Activated CD8-positive, alpha-beta memory T cell treated with anti-CD3 and anti-CD28 coated beads, Interleukin-2, amount 10 ng/mL, durations not matched to agents 7 days and 5 days (primary cell): ENCODE measurements at regions of chr1 and their contacts with region 1.

Region 1: DNA sequence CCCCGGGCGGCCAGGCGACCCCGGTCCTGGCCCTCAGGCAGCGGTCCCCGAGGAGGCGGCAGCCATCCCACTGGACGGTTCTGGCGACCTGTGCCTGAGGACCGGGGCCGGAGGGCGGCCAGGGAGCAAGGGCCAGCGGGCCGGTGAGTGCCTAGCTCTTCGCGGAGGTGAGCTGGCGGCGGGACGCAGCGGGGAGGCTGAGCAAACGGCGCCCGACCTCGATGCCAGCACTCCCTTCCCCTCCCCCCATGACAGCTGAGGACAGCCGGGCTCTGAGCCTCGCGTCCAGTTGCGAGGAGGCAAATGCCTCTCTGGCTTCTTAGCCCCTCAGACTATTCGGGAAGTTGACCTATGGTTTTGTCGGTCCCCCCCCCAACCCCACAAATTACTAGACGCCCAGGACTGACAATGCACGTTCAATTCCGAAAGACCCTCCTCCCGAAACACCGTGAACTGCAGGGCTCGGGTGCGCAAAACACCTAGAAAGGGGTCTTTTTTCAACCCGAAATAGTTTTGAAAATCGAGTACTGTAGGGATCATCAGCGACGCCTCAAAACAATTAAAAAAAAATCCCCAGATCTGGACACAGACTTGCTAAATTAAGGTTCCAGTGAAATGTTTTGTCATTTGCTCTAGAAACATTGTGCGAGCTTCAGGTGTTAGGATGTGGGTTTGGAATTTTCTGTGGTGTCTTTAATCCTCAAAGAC is 8.3 kb downstream of the CDKN2C start:
- DNase-seq: peak; percentile 45
- ATAC-seq: peak; percentile 48
- H3K4me3 Mint-ChIP-seq: peak overlapping the region; percentile 77
- H3K27ac Mint-ChIP-seq: peak overlapping the region; percentile 48
- H3K4me1 Mint-ChIP-seq: peaks cover 22% of the 10 kb centered on the region
- H3K27me3 Mint-ChIP-seq: peaks cover 58% of the 10 kb centered on the region

Region 2: DNA sequence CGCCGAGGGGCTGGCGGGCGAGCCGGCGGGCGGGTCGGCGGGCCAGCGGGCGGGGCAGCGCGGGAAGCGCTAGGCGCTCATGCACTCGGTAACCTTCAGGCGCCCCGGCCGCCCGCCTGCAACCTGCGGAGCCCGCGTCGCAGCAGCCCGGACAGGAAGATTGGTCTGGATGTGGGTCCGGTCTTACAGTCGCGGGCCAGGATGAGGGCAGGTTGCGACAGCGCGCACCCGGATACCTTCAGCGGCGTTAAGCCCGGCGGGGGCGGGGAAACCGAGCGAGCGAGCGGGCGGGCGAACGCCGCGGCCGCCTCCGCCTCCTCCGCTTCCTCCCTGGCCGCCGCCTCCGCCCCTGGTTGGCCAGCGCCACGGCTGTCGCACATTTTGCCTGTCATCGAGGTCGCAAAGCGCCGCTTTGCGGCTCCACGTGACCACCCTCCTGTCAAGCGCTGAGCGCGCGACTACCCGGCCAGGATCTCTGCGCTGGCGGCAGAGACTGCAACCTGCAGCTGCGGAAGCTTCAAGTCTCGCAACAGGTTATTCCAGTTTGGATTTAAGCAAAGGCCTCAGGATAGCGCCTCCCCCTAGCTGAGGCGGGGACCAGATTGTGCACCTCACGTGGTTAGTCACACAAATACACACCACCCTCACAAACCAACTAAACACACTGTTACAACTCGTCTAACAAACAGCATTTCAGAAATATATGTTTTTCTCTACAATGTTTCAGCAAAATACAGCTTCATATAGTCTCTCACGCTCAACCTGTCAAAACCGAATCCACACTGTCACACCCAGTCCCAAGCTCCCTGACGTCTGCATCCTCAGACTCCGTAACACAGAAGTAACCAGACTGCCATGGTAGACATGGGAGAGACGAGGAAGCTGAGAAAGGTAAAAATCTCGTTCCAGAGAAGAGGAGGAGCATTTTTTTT is 18.1 kb before region 1 on chr1 and contains the start of gene FAF1:
- CTCF ChIA-PET with region 1: interaction called, 10 read pairs
- DNase-seq: peak; percentile 98
- ATAC-seq: peak; percentile 94
- H3K4me3 Mint-ChIP-seq: peak within 1 kb of the TSS; percentile 80
- H3K27ac Mint-ChIP-seq: peak within 1 kb of the TSS; percentile 89
- H3K4me1 Mint-ChIP-seq: peaks cover 15% of the 10 kb centered on the region
- H3K27me3 Mint-ChIP-seq: peaks cover 4% of the 10 kb centered on the region
- total RNA-seq, gene FAF1: 84.4 to 94.4 TPM

Region 3: GRCh38 chr1:50968158-50968820 is 10.0 kb before region 1 on chr1:
- CTCF ChIA-PET with region 1: interaction called, 23 read pairs
- DNase-seq: peak; percentile 86
- ATAC-seq: peak; percentile 82
- H3K4me3 Mint-ChIP-seq: peak overlapping the region; percentile 97
- H3K27ac Mint-ChIP-seq: peak overlapping the region; percentile 97
- H3K4me1 Mint-ChIP-seq: peaks cover 24% of the 10 kb centered on the region
- H3K27me3 Mint-ChIP-seq: peaks cover 30% of the 10 kb centered on the region

Region 4: GRCh38 chr1:50989694-50990093 is 11.4 kb after region 1 on chr1:
- CTCF ChIA-PET with region 1: no interaction called
- DNase-seq: no peak
- ATAC-seq: no peak
- H3K4me3 Mint-ChIP-seq: no peak overlapping the region
- H3K27ac Mint-ChIP-seq: no peak overlapping the region
- H3K4me1 Mint-ChIP-seq: no peaks in the 10 kb centered on the region
- H3K27me3 Mint-ChIP-seq: peaks cover 24% of the 10 kb centered on the region